SK-N-SH (cell line): ENCODE measurements at regions of chr17 and their contacts with region 1.

Region 1: GRCh38 chr17:38605888-38606645 is at the start of gene SRCIN1:
- DNase-seq: peak; percentile 92
- H3K4me3 ChIP-seq: peak within 1 kb of the TSS; percentile 60 to 63
- H3K27ac ChIP-seq: peak within 1 kb of the TSS in 1 of 2 experiments; percentile 83; a peak in 2 of 4 replicates
- H3K4me1 ChIP-seq: peaks cover 0 to 58% of the 10 kb centered on the region in 2 experiments; a peak in 1 of 4 replicates
- H3K27me3 ChIP-seq: no peaks in the 10 kb centered on the region; the same call in 1 of the 2 replicates
- CTCF ChIP-seq: peak; percentile 90
- EP300 ChIP-seq: no peak
- RAD21 ChIP-seq: peak; percentile 50
- polyA plus RNA-seq, gene SRCIN1: 0.45 and 1.0 TPM in 2 replicates

Region 2: GRCh38 chr17:38333635-38334295 is 272.3 kb before region 1 on chr17:
- CTCF ChIA-PET with region 1: no interaction called
- POLR2A ChIA-PET with region 1: no interaction called
- DNase-seq: peak; percentile 78
- H3K4me3 ChIP-seq: no peak overlapping the region; a peak in 1 of 4 replicates
- H3K27ac ChIP-seq: no peak overlapping the region
- H3K4me1 ChIP-seq: no peaks in the 10 kb centered on the region; a peak in 1 of 4 replicates
- H3K27me3 ChIP-seq: no peaks in the 10 kb centered on the region
- CTCF ChIP-seq: peak; percentile 66
- EP300 ChIP-seq: no peak
- RAD21 ChIP-seq: peak; percentile 43

Region 3: DNA sequence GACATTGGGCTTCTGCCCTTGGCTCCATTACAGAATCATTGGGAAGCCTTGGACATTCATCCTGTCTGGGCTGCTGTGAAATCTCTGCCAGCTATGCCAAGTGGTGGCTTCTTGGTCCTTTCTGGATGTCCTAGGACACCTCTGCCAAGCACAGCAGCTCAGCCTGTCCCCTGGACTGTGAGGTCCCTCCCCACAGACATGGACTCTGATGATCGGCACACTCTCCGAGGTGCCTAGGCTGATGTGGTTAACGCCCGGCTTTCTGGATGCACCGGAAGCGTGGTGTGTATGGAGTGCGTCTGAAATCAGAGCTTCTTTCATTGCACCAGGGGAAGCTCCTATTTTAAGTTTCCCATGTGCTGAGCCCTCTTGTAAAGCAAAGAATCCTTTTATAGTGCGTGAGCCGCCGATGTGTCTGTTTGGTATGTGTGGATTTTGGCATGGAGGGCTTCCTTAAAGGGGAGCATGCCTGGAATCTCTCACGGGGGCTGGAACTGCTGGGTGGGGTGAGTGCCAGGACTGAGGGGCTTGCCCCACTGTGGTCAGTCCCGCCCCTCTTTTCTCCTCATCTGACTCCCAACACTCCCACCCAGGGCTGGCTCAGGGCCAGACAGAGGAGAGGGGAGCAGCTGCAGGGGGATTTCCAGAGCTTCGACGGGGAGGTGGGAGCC is 184.8 kb before region 1 on chr17:
- CTCF ChIA-PET with region 1: no interaction called
- POLR2A ChIA-PET with region 1: no interaction called
- DNase-seq: no peak
- H3K4me3 ChIP-seq: no peak overlapping the region
- H3K27ac ChIP-seq: peak overlapping the region in 1 of 2 experiments; percentile 59; a peak in 2 of 4 replicates
- H3K4me1 ChIP-seq: peaks cover 17 to 56% of the 10 kb centered on the region in 2 experiments; a peak in 2 of 4 replicates
- H3K27me3 ChIP-seq: no peaks in the 10 kb centered on the region
- CTCF ChIP-seq: no peak
- EP300 ChIP-seq: no peak
- RAD21 ChIP-seq: no peak

Region 4: GRCh38 chr17:38563362-38564253 is 42.5 kb before region 1 on chr17:
- CTCF ChIA-PET with region 1: interaction called, 88 read pairs
- POLR2A ChIA-PET with region 1: interaction called, 3 read pairs
- DNase-seq: no peak
- H3K4me3 ChIP-seq: no peak overlapping the region
- H3K27ac ChIP-seq: no peak overlapping the region
- H3K4me1 ChIP-seq: peaks cover 0 to 25% of the 10 kb centered on the region in 2 experiments; a peak in 2 of 4 replicates
- H3K27me3 ChIP-seq: peaks cover 9% of the 10 kb centered on the region; the same call in 1 of the 2 replicates
- CTCF ChIP-seq: no peak
- EP300 ChIP-seq: no peak
- RAD21 ChIP-seq: no peak

Region 5: GRCh38 chr17:38578229-38579082 is 27.6 kb before region 1 on chr17:
- CTCF ChIA-PET with region 1: interaction called, 232 read pairs
- POLR2A ChIA-PET with region 1: no interaction called
- DNase-seq: peak; percentile 84
- H3K4me3 ChIP-seq: no peak overlapping the region
- H3K27ac ChIP-seq: no peak overlapping the region
- H3K4me1 ChIP-seq: peaks cover 6 to 36% of the 10 kb centered on the region in 2 experiments; a peak in 2 of 4 replicates
- H3K27me3 ChIP-seq: peaks cover 22% of the 10 kb centered on the region; the same call in 1 of the 2 replicates
- CTCF ChIP-seq: no peak
- EP300 ChIP-seq: no peak
- RAD21 ChIP-seq: no peak

Region 6: DNA sequence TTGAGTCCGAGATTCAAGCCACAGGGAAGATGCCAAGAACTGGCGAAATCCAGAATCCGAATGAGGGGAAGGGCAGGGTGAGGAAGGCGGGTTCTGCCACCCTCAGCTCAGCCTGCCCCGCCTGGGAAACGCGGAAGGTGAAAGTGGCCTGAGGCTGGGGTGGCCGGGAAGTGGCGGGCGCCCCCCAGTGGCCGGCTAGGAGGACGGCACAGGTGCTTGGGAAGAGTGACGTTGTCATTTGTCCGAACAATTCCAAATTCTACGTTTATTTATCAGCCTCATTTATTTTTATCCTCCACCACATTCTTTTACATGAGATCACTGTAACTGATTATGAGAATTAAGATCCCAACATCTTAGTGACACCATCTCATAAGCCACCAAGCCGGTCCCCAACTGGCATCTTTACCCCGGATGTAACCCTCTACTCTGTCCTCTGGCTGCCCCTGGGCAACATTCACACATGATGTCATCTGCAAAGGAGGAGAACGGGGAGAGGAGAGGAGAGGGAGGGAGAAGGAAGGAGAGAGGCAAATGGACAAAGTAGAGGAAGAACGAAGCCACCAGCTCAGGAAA is 21.6 kb before region 1 on chr17:
- CTCF ChIA-PET with region 1: interaction called, 232 read pairs
- POLR2A ChIA-PET with region 1: no interaction called
- DNase-seq: peak; percentile 86
- H3K4me3 ChIP-seq: peak overlapping the region in 1 of 2 experiments; percentile 21; a peak in 1 of 4 replicates
- H3K27ac ChIP-seq: no peak overlapping the region
- H3K4me1 ChIP-seq: peaks cover 5 to 45% of the 10 kb centered on the region in 2 experiments; a peak in 3 of 4 replicates
- H3K27me3 ChIP-seq: no peaks in the 10 kb centered on the region; the same call in none of the 2 replicates
- CTCF ChIP-seq: peak; percentile 97
- EP300 ChIP-seq: no peak
- RAD21 ChIP-seq: peak; percentile 81

Region 7: DNA sequence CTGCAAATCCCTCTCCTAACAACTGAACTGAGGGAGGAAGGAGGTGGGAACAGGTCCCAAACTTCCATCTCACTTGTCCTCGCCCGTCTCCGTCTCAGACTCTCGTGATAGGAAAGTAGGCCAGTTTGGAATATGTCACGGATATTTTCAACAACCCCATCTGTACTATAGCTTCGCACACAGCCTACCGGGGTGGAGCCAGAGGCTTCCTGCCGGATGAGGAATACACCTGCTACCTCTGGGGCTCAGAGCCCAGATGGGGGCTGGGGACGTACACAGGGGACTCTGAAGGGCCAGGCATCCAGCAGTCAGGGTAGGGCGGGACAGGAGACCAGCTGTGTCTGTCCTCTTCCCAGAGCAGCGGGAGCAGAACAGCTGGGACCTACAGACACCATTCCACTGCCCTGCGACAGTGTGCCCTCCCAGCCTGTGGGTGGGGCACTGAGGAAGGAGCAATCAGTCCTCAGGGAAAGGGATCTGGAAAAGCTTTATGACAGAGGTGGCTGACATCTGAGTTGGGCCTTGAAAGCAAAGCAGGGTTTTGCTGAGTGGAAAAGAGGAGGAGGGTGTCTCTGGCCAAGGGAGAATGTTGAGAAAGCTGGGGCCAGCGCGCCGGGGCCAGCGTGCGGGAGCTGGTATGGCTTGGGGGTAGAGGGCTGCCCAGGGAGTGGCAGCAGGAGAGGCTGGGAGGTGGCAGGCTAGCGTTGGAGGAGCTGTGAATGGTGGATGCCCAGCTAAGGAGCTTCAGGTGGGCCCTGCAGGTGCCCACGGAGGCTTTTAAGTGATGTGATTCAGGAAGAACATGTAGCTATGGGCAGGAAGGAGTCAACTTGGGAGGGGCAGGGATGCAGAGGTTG is 11.2 kb after region 1 on chr17:
- CTCF ChIA-PET with region 1: interaction called, 33 read pairs
- POLR2A ChIA-PET with region 1: no interaction called
- DNase-seq: no peak
- H3K4me3 ChIP-seq: no peak overlapping the region
- H3K27ac ChIP-seq: no peak overlapping the region
- H3K4me1 ChIP-seq: no peaks in the 10 kb centered on the region; a peak in 1 of 4 replicates
- H3K27me3 ChIP-seq: peaks cover 10% of the 10 kb centered on the region; the same call in 1 of the 2 replicates
- CTCF ChIP-seq: no peak
- EP300 ChIP-seq: no peak
- RAD21 ChIP-seq: no peak

Region 8: GRCh38 chr17:38636054-38636453 is 30.0 kb after region 1 on chr17:
- CTCF ChIA-PET with region 1: interaction called, 18 read pairs
- POLR2A ChIA-PET with region 1: no interaction called
- DNase-seq: no peak
- H3K4me3 ChIP-seq: no peak overlapping the region
- H3K27ac ChIP-seq: no peak overlapping the region
- H3K4me1 ChIP-seq: no peaks in the 10 kb centered on the region
- H3K27me3 ChIP-seq: no peaks in the 10 kb centered on the region
- CTCF ChIP-seq: no peak
- EP300 ChIP-seq: no peak
- RAD21 ChIP-seq: no peak

Region 9: GRCh38 chr17:38724337-38724988 is 118.4 kb after region 1 on chr17:
- CTCF ChIA-PET with region 1: no interaction called
- POLR2A ChIA-PET with region 1: no interaction called
- DNase-seq: peak; percentile 94
- H3K4me3 ChIP-seq: no peak overlapping the region; a peak in 1 of 4 replicates
- H3K27ac ChIP-seq: peak overlapping the region; percentile 32 to 95; a peak in 3 of 4 replicates
- H3K4me1 ChIP-seq: peaks cover 7 to 41% of the 10 kb centered on the region in 2 experiments; a peak in 1 of 4 replicates
- H3K27me3 ChIP-seq: no peaks in the 10 kb centered on the region
- CTCF ChIP-seq: no peak
- EP300 ChIP-seq: peak in 1 of 2 experiments; percentile 58; a peak in 1 of 4 replicates
- RAD21 ChIP-seq: 0 out of 2 replicates have a peak, but pooled peaks have one; percentile 3